Activated T-helper 1 cell treated with anti-CD3 and anti-CD28 coated beads, Interleukin-12 subunit alpha, Interleukin-12 subunit beta, Interleukin-2, Interleukin-4 antibody, amounts not matched to agents 30 ng/mL and 10 ng/mL and 1 ng/mL, durations not matched to agents 14 hours and 24 hours and 36 hours (primary cell): ENCODE measurements at regions of chr3 and their contacts with region 1.

Region 1: DNA sequence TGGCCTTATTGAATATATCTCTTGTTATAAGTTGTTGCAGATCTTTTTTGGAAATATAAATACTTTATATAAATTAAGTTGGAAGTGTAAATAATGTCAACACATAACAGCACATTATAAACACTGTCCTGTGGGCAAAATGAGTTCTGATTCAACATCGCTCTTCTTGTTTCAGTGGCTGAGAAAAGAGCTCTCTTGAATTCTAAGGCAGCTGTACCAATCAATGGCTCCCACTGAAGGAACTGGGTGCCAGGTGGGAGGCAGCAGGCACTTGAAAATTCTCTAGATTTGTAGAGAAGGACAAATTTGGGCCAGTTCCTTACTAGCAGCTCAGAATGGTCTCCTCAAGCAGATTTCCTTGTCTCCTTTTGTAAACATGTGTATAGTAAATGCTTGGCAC is 45.6 kb downstream of the CHST2 start:
- DNase-seq: no peak
- H3K4me3 Mint-ChIP-seq: peak overlapping the region; percentile 52
- H3K27ac Mint-ChIP-seq: peak overlapping the region; percentile 87
- H3K4me1 Mint-ChIP-seq: peaks cover 71% of the 10 kb centered on the region
- H3K27me3 Mint-ChIP-seq: peaks cover 2% of the 10 kb centered on the region

Region 2: DNA sequence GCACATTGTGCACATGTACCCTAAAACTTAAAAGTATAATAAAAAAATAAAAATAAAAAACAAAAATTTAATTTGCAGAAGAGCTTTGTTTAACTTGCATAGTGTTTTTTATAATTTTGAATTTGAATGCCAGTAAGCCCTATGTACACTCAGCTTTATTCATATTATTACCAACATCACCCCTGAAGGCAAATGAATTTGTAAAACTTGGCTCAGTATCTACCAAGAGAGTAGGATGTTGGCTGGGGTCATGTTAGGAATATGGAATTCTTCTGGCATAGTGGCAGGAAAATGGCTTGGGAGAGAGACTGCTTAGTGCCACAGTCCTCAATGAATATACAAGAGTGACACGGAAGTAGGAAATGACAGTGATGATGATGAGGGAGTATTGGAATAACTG is 410.7 kb before region 1 on chr3:
- intact Hi-C with region 1: no loop called
- DNase-seq: no peak
- H3K4me3 Mint-ChIP-seq: no peak overlapping the region
- H3K27ac Mint-ChIP-seq: no peak overlapping the region
- H3K4me1 Mint-ChIP-seq: no peaks in the 10 kb centered on the region
- H3K27me3 Mint-ChIP-seq: peaks cover 3% of the 10 kb centered on the region

Region 3: DNA sequence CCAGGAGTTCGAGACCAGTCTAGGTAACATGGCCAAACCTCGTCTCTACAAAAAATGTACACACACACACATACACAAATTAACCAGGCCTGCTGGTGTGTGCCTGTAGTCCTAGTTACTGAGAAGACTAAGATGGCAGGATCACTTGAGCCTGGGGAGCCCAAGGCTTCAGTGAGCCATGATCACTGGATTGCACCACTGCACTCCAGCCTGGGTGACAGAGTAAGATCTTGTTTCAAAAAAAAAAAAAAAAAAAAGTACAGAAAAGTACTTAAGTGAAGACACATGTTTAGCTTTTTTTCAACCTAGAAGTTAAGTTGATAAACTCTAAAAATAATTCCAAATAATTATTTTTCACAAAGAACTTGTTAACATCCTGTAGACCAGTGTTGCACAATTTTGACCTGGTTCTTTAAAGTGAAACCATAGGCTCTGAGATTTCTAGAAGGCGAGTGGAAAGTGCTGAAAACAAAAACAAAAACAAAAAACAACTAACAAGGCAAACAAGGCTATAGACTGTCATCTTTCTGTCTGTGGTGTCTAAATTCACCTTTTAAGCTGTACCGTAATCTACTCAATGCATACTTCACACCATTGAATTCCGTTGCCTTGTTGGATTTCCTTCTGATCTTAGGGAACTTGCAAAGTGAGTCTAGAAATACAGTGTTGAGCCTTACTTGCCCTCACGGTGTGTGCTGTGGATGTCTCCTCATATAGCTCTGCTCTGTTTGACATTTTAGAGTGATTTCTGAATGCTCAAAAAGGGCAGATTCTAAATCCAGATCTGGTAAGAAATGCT is 17.9 kb after region 1 on chr3:
- intact Hi-C with region 1: loop called (anchors 2 kb)
- DNase-seq: no peak
- H3K4me3 Mint-ChIP-seq: no peak overlapping the region
- H3K27ac Mint-ChIP-seq: peak overlapping the region; percentile 15
- H3K4me1 Mint-ChIP-seq: peaks cover 14% of the 10 kb centered on the region
- H3K27me3 Mint-ChIP-seq: no peaks in the 10 kb centered on the region

Region 4: GRCh38 chr3:143276592-143276991 is 111.4 kb after region 1 on chr3:
- intact Hi-C with region 1: loop called (anchors 2 kb)
- DNase-seq: no peak
- H3K4me3 Mint-ChIP-seq: no peak overlapping the region
- H3K27ac Mint-ChIP-seq: no peak overlapping the region
- H3K4me1 Mint-ChIP-seq: peaks cover 11% of the 10 kb centered on the region
- H3K27me3 Mint-ChIP-seq: no peaks in the 10 kb centered on the region